Activated naive CD4-positive, alpha-beta T cell treated with anti-CD3 and anti-CD28 coated beads for 36 hours (primary cell): ENCODE measurements at regions of chr9 and their contacts with region 1.

Region 1: GRCh38 chr9:34458013-34458958 is at the starts of genes DNAI1 and FAM219A:
- DNase-seq: peak; percentile 99
- H3K4me3 Mint-ChIP-seq: peak within 1 kb of the TSS; percentile 87
- H3K27ac Mint-ChIP-seq: no peak within 1 kb of the TSS
- H3K4me1 Mint-ChIP-seq: peaks cover 43% of the 10 kb centered on the region
- H3K27me3 Mint-ChIP-seq: peaks cover 1% of the 10 kb centered on the region
- total RNA-seq, gene DNAI1: 0.26 TPM in 1 of 2 experiments, not detected in the other
- total RNA-seq, gene FAM219A: 11.1 to 11.6 TPM

Region 2: GRCh38 chr9:34126207-34127034 is 331.9 kb before region 1 on chr9 and contains the start of gene DCAF12:
- CTCF ChIA-PET with region 1: no interaction called
- intact Hi-C with region 1: loop called (anchors 5 kb)
- DNase-seq: peak; percentile 94
- H3K4me3 Mint-ChIP-seq: peak within 1 kb of the TSS; percentile 93
- H3K27ac Mint-ChIP-seq: peak within 1 kb of the TSS; percentile 93
- H3K4me1 Mint-ChIP-seq: peaks cover 35% of the 10 kb centered on the region
- H3K27me3 Mint-ChIP-seq: no peaks in the 10 kb centered on the region
- total RNA-seq, gene DCAF12: 34.0 to 37.0 TPM

Region 3: GRCh38 chr9:34233672-34234071 is 224.6 kb before region 1 on chr9:
- CTCF ChIA-PET with region 1: no interaction called
- intact Hi-C with region 1: no loop called
- DNase-seq: no peak
- H3K4me3 Mint-ChIP-seq: no peak overlapping the region
- H3K27ac Mint-ChIP-seq: no peak overlapping the region
- H3K4me1 Mint-ChIP-seq: peaks cover 5% of the 10 kb centered on the region
- H3K27me3 Mint-ChIP-seq: no peaks in the 10 kb centered on the region

Region 4: DNA sequence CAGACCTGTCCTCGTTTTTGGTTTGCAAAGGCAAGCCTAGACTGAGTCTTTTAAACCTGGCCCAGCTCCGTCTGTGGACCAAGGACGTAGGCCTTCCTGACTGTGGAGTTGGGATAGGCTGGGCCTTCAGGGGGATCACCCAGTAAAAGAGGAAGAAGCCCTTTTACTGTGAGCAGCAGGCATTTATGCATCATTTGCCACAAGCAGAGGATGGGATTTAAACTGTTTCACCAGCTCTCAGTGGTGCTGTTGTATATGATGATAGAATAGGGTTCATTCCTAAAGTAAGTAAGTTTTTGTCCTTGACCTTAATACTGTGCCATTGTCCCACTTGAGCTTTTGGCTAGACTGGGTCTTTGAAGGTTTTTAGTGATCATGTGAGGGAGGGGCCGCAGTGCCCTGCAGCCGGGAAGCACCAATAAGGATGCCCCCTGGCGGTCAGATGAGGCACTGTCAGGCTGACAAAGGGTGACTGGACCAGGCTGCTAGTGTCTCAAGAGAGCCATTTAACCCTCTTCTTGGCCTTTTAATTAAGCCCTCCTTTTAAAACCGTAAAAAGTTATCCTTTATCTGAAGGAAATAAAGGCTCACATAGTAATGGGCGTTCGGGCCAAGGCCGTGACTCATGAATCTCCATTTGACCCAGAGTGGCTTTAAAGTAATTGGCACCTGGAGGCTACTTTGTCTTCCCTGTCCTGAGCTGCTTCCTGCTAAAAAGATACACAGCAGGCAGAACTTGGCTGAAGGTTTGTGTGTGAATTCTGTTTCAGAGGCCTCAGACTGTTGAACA is 205.4 kb before region 1 on chr9:
- CTCF ChIA-PET with region 1: no interaction called
- intact Hi-C with region 1: loop called (anchors 2 kb)
- DNase-seq: peak; percentile 80
- H3K4me3 Mint-ChIP-seq: no peak overlapping the region
- H3K27ac Mint-ChIP-seq: peak overlapping the region; percentile 36
- H3K4me1 Mint-ChIP-seq: peaks cover 16% of the 10 kb centered on the region
- H3K27me3 Mint-ChIP-seq: no peaks in the 10 kb centered on the region

Region 5: DNA sequence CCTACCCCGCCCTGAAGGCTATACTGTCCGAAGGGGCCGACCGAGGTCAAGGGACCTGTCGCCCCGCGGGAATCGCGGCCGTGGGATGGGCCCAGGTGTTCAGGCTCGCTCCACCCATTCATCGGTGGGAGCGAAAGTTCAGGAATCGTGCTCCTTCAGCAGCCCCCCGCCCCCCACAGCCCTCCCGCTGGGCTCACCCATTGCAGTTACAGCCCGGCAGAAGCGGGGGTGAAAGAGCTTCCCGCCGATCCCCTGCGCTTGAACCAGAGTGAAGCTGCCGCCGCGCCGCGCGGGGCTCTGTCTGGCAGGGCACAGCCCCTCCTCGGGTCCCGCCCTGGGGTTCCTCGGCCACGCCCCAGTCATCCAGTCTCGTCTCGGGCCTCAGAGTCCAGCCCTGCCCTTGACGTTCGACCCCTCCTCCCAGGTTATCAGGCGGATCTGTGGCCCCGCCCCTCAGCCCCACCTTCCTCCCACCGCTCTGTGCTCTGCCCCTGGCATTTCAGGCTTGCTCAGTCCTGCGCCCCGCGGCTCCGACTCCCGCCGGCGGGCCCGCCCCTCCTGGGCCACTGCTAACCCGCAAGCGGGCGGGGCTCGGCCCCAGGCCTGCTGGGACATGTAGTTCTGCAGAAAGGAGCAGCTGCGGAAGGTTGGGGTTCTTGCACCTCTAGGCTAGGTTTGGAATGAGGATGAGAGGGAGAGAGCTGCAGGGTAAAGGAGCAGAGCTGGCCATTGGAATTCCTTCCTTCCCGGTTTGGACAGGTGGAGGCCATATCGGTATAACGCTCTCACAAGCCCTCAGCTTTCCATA is 81.5 kb before region 1 on chr9 and contains the start of gene MYORG:
- CTCF ChIA-PET with region 1: interaction called, 3 read pairs
- intact Hi-C with region 1: loop called (anchors 1 kb)
- DNase-seq: peak; percentile 97
- H3K4me3 Mint-ChIP-seq: peak within 1 kb of the TSS; percentile 80
- H3K27ac Mint-ChIP-seq: no peak within 1 kb of the TSS
- H3K4me1 Mint-ChIP-seq: peaks cover 30% of the 10 kb centered on the region
- H3K27me3 Mint-ChIP-seq: no peaks in the 10 kb centered on the region
- total RNA-seq, gene MYORG: 1.1 to 2.0 TPM

Region 6: GRCh38 chr9:34522971-34523797 is 64.9 kb after region 1 on chr9 and contains the start of gene ENHO:
- CTCF ChIA-PET with region 1: interaction called, 4 read pairs
- intact Hi-C with region 1: loop called (anchors 1 kb)
- DNase-seq: peak; percentile 88
- H3K4me3 Mint-ChIP-seq: peak within 1 kb of the TSS; percentile 57
- H3K27ac Mint-ChIP-seq: no peak within 1 kb of the TSS
- H3K4me1 Mint-ChIP-seq: peaks cover 22% of the 10 kb centered on the region
- H3K27me3 Mint-ChIP-seq: peaks cover 11% of the 10 kb centered on the region
- total RNA-seq, gene ENHO: 0.19 to 0.27 TPM

Region 7: GRCh38 chr9:34554211-34555001 is 96.1 kb after region 1 on chr9:
- CTCF ChIA-PET with region 1: no interaction called
- intact Hi-C with region 1: no loop called
- DNase-seq: no peak
- H3K4me3 Mint-ChIP-seq: no peak overlapping the region
- H3K27ac Mint-ChIP-seq: no peak overlapping the region
- H3K4me1 Mint-ChIP-seq: no peaks in the 10 kb centered on the region
- H3K27me3 Mint-ChIP-seq: peaks cover 17% of the 10 kb centered on the region

Region 8: GRCh38 chr9:34637356-34638137 is 179.3 kb after region 1 on chr9 and contains the start of gene SIGMAR1:
- CTCF ChIA-PET with region 1: interaction called, 3 read pairs
- intact Hi-C with region 1: loop called (anchors 1 kb)
- DNase-seq: peak; percentile 94
- H3K4me3 Mint-ChIP-seq: peak within 1 kb of the TSS; percentile 92
- H3K27ac Mint-ChIP-seq: peak within 1 kb of the TSS; percentile 89
- H3K4me1 Mint-ChIP-seq: peaks cover 37% of the 10 kb centered on the region
- H3K27me3 Mint-ChIP-seq: no peaks in the 10 kb centered on the region
- total RNA-seq, gene SIGMAR1: 58.9 TPM

Region 9: GRCh38 chr9:35014517-35014916 is 556.2 kb after region 1 on chr9:
- CTCF ChIA-PET with region 1: no interaction called
- intact Hi-C with region 1: no loop called
- DNase-seq: no peak
- H3K4me3 Mint-ChIP-seq: no peak overlapping the region
- H3K27ac Mint-ChIP-seq: no peak overlapping the region
- H3K4me1 Mint-ChIP-seq: peaks cover 7% of the 10 kb centered on the region
- H3K27me3 Mint-ChIP-seq: no peaks in the 10 kb centered on the region

Region 10: GRCh38 chr9:35111001-35111933 is 653.0 kb after region 1 on chr9:
- CTCF ChIA-PET with region 1: no interaction called
- intact Hi-C with region 1: loop called (anchors 5 kb)
- DNase-seq: peak; percentile 97
- H3K4me3 Mint-ChIP-seq: peak overlapping the region; percentile 56
- H3K27ac Mint-ChIP-seq: peak overlapping the region; percentile 88
- H3K4me1 Mint-ChIP-seq: peaks cover 44% of the 10 kb centered on the region
- H3K27me3 Mint-ChIP-seq: no peaks in the 10 kb centered on the region